HepG2 (cell line): ENCODE measurements at regions of chr16 and their contacts with region 1.

Region 1: DNA sequence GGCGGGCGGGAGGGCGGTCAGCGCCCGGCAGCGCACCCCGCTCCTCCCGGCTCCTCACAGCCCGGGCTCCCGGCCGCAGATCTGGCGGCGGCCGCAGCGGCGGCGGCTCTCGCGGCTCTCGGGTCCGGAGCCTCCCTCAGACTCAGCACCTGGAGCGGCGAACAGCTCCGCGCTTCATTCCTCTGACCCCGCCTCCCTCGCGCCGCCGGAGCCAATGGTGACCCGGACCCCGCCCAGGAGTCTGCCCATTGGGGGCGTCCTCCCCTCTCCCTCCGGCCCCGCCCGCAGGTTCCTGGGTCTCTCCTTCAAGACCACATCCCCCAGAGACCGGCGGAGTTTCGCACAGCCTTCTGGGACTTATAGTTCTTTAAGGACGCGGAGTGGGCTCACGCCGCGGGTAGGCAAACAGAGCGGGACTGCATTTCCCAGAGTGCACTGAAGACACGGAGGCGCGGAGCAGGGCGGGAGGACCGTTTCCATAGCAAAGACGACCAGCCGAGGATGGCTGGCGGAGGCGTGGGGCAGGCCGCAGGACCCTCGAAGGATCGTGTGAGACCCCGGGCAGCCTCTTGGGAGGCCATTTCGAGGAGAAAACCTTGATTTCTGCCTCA is at the start of gene SMPD3:
- DNase-seq: peak; percentile 99
- ATAC-seq: peak; percentile 97
- H3K4me3 ChIP-seq: peak within 1 kb of the TSS; percentile 41 to 70 (median 53)
- H3K27ac ChIP-seq: no peak within 1 kb of the TSS
- H3K4me1 ChIP-seq: peaks cover 9% of the 10 kb centered on the region
- H3K27me3 ChIP-seq: no peaks in the 10 kb centered on the region; a peak in 1 of 5 replicates
- CTCF ChIP-seq: peak; percentile 6
- EP300 ChIP-seq: peak in 1 of 2 experiments; percentile 35; a peak in 1 of 4 replicates
- POLR2A ChIP-seq: no peak
- RAD21 ChIP-seq: no peak; the same call in none of the 2 replicates
- total RNA-seq, gene SMPD3: 0.07 TPM in 1 of 2 replicates, not detected in the other

Region 2: GRCh38 chr16:68382296-68382718 is 66.2 kb before region 1 on chr16:
- CTCF ChIA-PET with region 1: no interaction called
- POLR2A ChIA-PET with region 1: no interaction called
- in situ Hi-C with region 1: no loop called
- intact Hi-C with region 1: loop called (anchors 10 kb)
- DNase-seq: no peak
- ATAC-seq: peak; percentile 75
- H3K4me3 ChIP-seq: no peak overlapping the region
- H3K27ac ChIP-seq: no peak overlapping the region
- H3K4me1 ChIP-seq: peaks cover 23% of the 10 kb centered on the region
- H3K27me3 ChIP-seq: peaks cover 2 to 42% of the 10 kb centered on the region in 2 experiments; a peak in 4 of 5 replicates
- CTCF ChIP-seq: peak; percentile 27
- EP300 ChIP-seq: no peak
- POLR2A ChIP-seq: no peak
- RAD21 ChIP-seq: no peak

Region 3: DNA sequence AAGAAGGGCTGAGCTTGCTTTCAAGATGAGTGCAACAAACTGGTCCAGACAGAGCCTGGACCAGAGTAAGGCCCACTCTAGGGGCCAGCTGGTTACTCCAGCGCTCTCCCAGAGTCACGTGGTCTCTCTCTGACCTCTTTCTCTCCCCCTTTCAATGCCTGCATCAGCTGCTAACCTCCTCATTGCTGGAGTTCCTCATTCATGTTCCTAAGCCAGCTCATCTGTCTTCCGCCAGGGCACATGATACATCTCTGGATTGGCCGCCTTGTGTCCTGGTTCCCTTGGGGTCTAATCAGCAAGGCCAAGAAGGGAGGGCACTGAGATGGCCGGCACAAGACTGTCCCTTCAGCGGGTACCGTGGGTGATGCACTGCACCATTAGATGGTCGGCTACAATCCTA is 63.7 kb after region 1 on chr16:
- CTCF ChIA-PET with region 1: interaction called, 9 read pairs
- POLR2A ChIA-PET with region 1: no interaction called
- in situ Hi-C with region 1: loop called (anchors 5 kb)
- intact Hi-C with region 1: no loop called
- DNase-seq: no peak
- ATAC-seq: no peak
- H3K4me3 ChIP-seq: no peak overlapping the region
- H3K27ac ChIP-seq: no peak overlapping the region
- H3K4me1 ChIP-seq: peaks cover 19% of the 10 kb centered on the region
- H3K27me3 ChIP-seq: peaks cover 3 to 22% of the 10 kb centered on the region in 2 experiments; a peak in 4 of 5 replicates
- CTCF ChIP-seq: no peak
- EP300 ChIP-seq: no peak
- POLR2A ChIP-seq: no peak
- RAD21 ChIP-seq: no peak